ENCODE measurements at regions of chr2 and their contacts with region 1.

Region 1: DNA sequence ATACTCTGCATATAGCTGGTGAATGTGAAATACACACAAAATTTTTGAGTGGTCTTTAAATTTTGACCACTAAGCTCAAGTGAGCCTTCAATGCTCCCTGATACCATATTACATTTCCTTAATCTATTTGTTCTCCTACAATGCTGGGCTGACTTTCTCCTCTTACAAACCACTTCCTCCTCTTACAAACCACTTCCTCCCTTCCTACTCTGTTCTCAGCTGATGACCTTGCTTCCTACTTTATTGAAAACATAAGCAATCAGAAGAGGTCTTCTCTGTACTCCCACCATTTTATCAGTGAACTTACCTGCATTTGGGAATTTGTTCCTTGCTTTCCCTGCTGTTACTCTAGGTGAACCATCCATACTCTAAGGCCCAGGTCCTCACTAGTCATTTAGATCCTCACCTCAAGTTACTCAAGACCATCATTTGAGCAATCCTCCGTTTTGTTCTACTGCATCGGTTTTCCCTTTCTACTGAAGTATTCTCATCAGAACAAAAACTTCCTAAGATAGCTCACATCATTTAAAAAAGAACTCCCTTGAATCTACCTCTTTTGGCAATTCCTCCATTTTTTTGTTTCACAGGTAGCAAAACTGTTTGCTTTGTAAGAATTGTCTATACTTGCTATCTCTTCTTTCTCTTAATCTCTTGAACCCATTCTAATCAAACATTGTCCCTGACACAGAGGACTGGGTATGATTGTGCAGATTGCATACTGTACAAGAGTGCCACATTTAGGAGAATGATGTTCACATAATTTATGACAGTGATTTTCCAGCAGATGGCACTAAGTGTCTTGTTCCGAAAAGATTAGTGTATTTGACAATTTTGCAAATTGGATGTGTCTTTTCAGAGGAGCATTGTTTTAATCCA is 96.5 kb downstream of the EPB41L5 start:
- DNase-seq: peak; percentile 76
- ATAC-seq: peak; percentile 56
- H3K4me3 ChIP-seq: 0 out of 2 replicates have a peak overlapping the region, but pooled peaks have one; percentile 29
- H3K27ac ChIP-seq: peak overlapping the region; percentile 83
- H3K4me1 ChIP-seq: peaks cover 45% of the 10 kb centered on the region
- H3K27me3 ChIP-seq: no peaks in the 10 kb centered on the region
- CTCF ChIP-seq: peak; percentile 86

Region 2: DNA sequence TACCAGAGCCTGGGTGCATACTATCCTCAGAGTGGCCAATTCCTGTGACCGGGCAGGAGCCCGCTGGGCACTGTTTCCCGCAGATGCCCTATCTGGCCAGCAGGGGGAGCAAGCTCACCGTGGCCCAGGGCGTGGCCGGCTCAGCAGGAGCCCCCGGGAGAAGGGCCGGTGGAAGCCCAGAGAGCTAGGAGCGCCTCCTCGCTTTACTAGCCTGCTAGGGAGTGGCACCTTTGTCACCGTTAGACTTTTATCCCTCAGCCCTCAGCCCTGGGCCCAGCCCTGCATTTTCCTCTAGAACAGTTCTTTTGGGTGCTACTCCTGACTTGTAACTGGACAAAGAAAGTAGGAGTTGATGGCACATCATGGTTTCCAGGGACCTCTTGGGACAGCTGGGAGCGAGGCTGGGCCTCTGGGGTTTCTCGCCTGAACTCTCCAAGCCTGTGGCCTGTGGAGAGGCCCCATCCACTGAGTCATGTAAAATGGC is 406.5 kb before region 1 on chr2:
- CTCF ChIA-PET with region 1: no interaction called
- POLR2A ChIA-PET with region 1: no interaction called
- intact Hi-C with region 1: loop called (anchors 5 kb)
- DNase-seq: peak; percentile 81
- ATAC-seq: peak; percentile 96
- H3K4me3 ChIP-seq: no peak overlapping the region
- H3K27ac ChIP-seq: no peak overlapping the region
- H3K4me1 ChIP-seq: peaks cover 4% of the 10 kb centered on the region; the same call in 1 of the 2 replicates
- H3K27me3 ChIP-seq: no peaks in the 10 kb centered on the region
- CTCF ChIP-seq: peak; percentile 97

Region 3: DNA sequence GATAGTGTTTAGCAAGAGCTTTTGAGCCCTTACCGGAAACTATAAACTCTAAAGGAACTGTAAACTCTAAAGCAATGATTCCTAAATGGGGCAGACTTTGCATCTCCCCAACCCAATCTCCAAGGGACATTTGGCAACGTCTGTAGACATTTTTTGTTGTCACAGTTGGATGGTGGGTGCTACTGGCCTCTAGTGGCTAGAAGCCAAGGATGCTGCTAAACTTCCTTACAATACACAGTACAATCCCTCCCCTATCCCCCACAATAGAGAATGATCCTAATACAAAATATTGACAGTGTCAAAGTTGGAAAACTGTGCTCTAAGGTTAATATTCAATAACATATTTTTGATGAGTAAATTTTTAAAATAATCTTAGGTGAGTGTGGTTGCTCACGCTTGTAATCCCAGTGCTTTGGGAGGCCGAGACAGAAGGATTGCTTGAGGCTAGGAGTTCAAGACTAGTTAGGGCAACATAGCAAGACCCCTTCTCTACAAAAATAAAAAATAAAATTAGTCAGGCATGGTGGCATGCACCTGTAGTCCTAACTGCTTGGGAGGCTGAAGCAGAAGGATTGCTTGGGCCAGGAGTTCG is 283.0 kb before region 1 on chr2:
- CTCF ChIA-PET with region 1: no interaction called
- POLR2A ChIA-PET with region 1: no interaction called
- intact Hi-C with region 1: loop called (anchors 10 kb)
- DNase-seq: peak; percentile 67
- ATAC-seq: peak; percentile 57
- H3K4me3 ChIP-seq: no peak overlapping the region
- H3K27ac ChIP-seq: no peak overlapping the region
- H3K4me1 ChIP-seq: peaks cover 30% of the 10 kb centered on the region
- H3K27me3 ChIP-seq: no peaks in the 10 kb centered on the region
- CTCF ChIP-seq: peak; percentile 88

Region 4: GRCh38 chr2:120066800-120067547 is 42.5 kb before region 1 on chr2:
- CTCF ChIA-PET with region 1: no interaction called
- POLR2A ChIA-PET with region 1: no interaction called
- intact Hi-C with region 1: loop called (anchors 5 kb)
- DNase-seq: peak; percentile 80
- ATAC-seq: peak; percentile 98
- H3K4me3 ChIP-seq: peak overlapping the region; percentile 46
- H3K27ac ChIP-seq: peak overlapping the region; percentile 46
- H3K4me1 ChIP-seq: peaks cover 17% of the 10 kb centered on the region
- H3K27me3 ChIP-seq: no peaks in the 10 kb centered on the region
- CTCF ChIP-seq: no peak

Region 5: DNA sequence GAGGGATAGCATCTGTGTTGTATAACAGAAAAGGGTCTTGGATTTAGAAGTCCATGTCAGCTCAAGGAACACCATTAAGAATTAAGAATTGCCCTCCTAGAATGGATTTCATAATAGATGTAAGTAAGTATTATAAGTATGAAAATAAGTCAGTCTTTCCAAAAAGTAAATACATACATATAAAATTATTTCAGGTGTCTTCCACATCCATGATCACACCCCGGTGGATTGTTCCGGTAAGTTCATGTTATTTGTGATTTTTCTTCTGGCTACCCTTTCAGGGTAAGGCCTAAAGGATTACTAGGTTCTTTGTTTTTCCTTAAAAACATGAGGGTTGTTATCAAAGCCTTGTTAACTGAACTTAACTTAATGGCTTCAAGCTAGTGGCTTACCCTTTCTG is 57.8 kb after region 1 on chr2:
- CTCF ChIA-PET with region 1: no interaction called
- POLR2A ChIA-PET with region 1: no interaction called
- intact Hi-C with region 1: loop called (anchors 2 kb)
- DNase-seq: peak; percentile 12
- ATAC-seq: no peak
- H3K4me3 ChIP-seq: no peak overlapping the region
- H3K27ac ChIP-seq: no peak overlapping the region
- H3K4me1 ChIP-seq: no peaks in the 10 kb centered on the region
- H3K27me3 ChIP-seq: no peaks in the 10 kb centered on the region
- CTCF ChIP-seq: peak; percentile 51; the same call in 1 of the 2 replicates

Region 6: GRCh38 chr2:120312861-120313694 is 203.7 kb after region 1 on chr2:
- CTCF ChIA-PET with region 1: interaction called, 4 read pairs
- POLR2A ChIA-PET with region 1: no interaction called
- intact Hi-C with region 1: loop called (anchors 1 kb)
- DNase-seq: peak; percentile 95
- ATAC-seq: peak; percentile 87
- H3K4me3 ChIP-seq: peak overlapping the region; percentile 64
- H3K27ac ChIP-seq: no peak overlapping the region
- H3K4me1 ChIP-seq: peaks cover 4% of the 10 kb centered on the region; the same call in 1 of the 2 replicates
- H3K27me3 ChIP-seq: no peaks in the 10 kb centered on the region
- CTCF ChIP-seq: peak; percentile 98